ENCODE measurements at regions of chr7 and their contacts with region 1.

Region 1: DNA sequence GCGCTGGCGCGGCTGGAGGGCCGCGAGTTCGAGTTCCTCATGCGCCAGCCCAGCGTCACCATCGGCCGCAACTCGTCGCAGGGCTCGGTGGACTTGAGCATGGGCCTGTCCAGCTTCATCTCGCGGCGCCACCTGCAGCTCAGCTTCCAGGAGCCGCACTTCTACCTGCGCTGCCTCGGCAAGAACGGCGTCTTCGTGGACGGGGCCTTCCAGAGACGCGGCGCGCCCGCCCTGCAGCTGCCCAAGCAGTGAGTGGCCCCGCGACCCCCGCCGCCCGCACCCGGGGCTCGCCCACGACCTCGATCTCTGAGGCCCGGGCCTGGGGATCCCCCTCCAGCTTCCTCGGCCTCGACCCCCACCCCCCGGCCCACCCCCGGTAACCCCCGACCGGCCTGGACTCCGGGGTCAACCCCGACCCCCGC is 537 bp downstream of the FOXK1 start:
- DNase-seq: no peak
- H3K27ac ChIP-seq: peak overlapping the region; percentile 99
- CTCF ChIP-seq: no peak

Region 2: GRCh38 chr7:4641667-4642467 is 40.8 kb before region 1 on chr7:
- CTCF ChIA-PET with region 1: interaction called, 10 read pairs
- POLR2A ChIA-PET with region 1: interaction called, 5 read pairs
- DNase-seq: peak; percentile 94
- H3K27ac ChIP-seq: peak overlapping the region; percentile 90
- CTCF ChIP-seq: peak; percentile 79